ENCODE measurements at regions of chr10 and their contacts with region 1.

Region 1: GRCh38 chr10:14358886-14359573 is 28.3 kb upstream of the FRMD4A start:
- DNase-seq: no peak
- H3K4me3 ChIP-seq: no peak overlapping the region
- H3K27ac ChIP-seq: no peak overlapping the region
- H3K27me3 ChIP-seq: peaks cover 32% of the 10 kb centered on the region
- CTCF ChIP-seq: no peak

Region 2: DNA sequence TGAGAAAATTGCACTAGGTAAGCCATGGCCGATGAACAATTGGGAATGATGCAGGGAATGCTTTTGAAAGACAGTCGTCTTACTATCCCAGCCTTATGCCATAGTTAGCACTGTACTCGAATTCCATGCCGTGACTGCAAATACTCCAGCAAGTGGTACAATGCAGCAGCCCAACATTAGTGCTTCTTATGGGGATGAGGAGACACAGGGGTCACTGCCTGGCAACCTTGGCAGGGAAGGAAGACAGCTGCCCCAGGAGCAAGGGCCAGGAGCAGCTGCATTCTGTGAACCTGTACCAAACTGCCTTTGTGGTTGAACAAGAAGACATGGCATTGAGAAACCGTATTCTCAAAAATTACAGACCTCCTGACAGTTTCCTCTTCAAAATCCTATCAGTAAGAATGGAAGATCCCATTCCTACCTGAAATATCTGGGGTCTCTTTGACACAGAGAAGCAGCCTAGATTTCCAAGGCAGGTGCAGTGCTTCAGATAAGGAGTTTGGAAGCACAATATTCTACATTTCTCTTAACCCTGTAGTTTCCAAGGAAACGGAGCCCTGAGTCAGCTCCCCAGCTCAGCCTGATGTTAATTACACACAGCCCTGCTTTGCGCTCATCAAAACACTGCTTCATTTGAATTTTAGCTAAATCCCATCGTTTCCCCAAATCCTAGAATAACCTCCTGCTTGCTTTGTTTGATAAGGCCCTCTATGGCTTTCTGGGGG is 20.7 kb after region 1 on chr10:
- CTCF ChIA-PET with region 1: no interaction called
- POLR2A ChIA-PET with region 1: interaction called, 15 read pairs
- DNase-seq: no peak
- H3K4me3 ChIP-seq: no peak overlapping the region
- H3K27ac ChIP-seq: no peak overlapping the region
- H3K27me3 ChIP-seq: peaks cover 6% of the 10 kb centered on the region
- CTCF ChIP-seq: no peak